ENCODE measurements at regions of chr6 and their contacts with region 1.

Region 1: DNA sequence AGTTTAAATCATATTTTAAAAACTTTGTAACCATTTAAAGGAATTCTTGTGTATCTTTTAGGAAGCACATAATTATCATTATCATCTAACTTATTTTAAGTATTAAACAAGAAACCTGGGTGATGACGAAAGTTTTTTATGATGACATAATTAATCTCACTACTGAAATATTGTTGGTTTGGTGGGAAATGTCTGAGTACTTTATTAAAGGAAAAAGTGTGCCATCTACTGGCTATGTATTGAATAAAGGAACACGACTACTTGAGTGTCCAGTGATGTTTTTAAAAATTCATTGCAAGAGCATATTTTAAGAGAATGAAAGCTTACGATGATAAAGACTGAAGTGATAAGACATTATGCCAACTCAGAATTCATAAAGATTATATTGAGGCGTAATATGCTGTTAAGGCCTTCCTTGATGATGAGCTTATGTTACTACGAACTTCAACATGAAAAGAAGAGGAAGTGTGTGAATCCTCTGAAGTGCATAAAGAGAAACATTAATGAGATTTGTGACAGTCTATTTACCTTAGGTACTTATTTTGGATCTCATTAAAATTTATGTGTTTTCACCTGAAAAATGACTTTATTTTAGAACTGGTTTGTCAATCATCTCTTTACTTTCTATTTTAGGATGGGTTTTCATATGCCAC is 12.0 kb upstream of the TRMT11 start:
- DNase-seq: no peak
- H3K4me3 ChIP-seq: no peak overlapping the region
- H3K27ac ChIP-seq: peak overlapping the region in 38 of 59 donors; percentile 2 to 78 (median 51)
- H3K27me3 ChIP-seq: no peaks in the 10 kb centered on the region
- CTCF ChIP-seq: peak; percentile 53 to 92 (median 72)

Region 2: DNA sequence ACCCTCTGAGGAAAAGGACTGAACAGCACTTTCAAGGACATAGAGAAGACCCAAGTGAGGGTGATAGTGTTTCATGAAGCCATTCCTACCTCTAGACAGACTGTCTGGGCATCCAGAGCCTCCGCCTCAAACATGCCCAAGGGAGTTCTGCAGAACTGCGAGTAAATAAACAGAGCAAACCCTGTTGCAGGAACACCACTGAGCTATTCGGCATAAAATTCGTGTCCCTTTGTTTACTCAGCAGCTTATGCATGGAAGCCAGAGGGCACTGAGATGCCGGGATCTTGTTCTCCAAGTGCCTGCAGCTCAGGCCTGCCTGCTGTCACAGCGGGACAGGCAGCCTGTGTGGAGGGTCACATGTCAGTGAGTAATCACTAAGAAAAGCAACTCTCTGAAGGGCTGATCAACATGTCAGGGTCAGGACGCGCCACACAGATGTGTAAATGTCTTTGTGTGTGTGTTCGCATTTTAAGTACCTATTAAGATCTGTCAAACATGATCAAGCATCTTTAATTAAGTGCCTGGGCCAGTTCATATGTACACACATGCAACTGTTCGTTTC is 389.8 kb before region 1 on chr6:
- intact Hi-C with region 1: loop called in 1 of 2 experiments (anchors 10 kb)
- DNase-seq: peak in 9 of 10 donors; percentile 59 to 87 (median 82)
- H3K4me3 ChIP-seq: peak overlapping the region in 10 of 59 donors; percentile 0 to 27 (median 22)
- H3K27ac ChIP-seq: peak overlapping the region in 50 of 59 donors; percentile 4 to 85 (median 58)
- H3K27me3 ChIP-seq: peaks cover 0 to 4% (median 0%) of the 10 kb centered on the region in 45 donors
- CTCF ChIP-seq: peak; percentile 24 to 82 (median 61)

Region 3: DNA sequence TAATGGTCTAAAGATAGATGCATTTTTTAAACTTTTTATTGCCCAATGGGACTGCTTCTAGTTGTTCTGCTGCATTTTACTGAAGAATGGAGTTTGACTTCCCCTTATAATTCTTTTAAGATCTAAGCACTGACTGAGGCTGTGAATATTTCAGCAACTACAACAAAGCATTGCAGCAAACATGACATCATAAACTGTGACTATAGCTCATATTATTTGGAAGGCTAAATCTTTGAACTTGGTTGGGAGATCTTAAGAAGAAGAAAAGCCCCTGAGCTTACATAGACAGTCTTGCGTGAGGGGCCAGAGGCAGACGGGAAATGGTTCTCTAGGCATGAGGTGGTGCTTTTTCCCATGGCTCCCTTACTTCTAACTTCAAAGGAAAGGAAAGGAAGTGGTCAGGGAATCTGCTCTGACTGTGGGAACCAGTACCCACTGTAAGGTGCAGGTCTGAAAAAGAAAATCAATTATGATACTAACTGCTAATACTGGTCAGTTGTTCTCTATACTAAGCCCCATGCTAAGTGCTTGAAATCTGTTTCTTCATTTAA is 210.1 kb before region 1 on chr6:
- intact Hi-C with region 1: no loop called
- DNase-seq: no peak
- H3K4me3 ChIP-seq: no peak overlapping the region
- H3K27ac ChIP-seq: peak overlapping the region in 15 of 59 donors; percentile 6 to 45 (median 24)
- H3K27me3 ChIP-seq: peaks cover 0 to 6% (median 0%) of the 10 kb centered on the region in 45 donors
- CTCF ChIP-seq: no peak

Region 4: GRCh38 chr6:125779924-125780539 is 194.3 kb before region 1 on chr6:
- intact Hi-C with region 1: loop called in 1 of 2 experiments (anchors 2 kb)
- DNase-seq: peak; percentile 69 to 93 (median 83)
- H3K4me3 ChIP-seq: peak overlapping the region; percentile 42 to 93 (median 77)
- H3K27ac ChIP-seq: peak overlapping the region; percentile 72 to 99 (median 93)
- H3K27me3 ChIP-seq: no peaks in the 10 kb centered on the region
- CTCF ChIP-seq: peak in 52 of 56 donors; percentile 23 to 71 (median 51)

Region 5: DNA sequence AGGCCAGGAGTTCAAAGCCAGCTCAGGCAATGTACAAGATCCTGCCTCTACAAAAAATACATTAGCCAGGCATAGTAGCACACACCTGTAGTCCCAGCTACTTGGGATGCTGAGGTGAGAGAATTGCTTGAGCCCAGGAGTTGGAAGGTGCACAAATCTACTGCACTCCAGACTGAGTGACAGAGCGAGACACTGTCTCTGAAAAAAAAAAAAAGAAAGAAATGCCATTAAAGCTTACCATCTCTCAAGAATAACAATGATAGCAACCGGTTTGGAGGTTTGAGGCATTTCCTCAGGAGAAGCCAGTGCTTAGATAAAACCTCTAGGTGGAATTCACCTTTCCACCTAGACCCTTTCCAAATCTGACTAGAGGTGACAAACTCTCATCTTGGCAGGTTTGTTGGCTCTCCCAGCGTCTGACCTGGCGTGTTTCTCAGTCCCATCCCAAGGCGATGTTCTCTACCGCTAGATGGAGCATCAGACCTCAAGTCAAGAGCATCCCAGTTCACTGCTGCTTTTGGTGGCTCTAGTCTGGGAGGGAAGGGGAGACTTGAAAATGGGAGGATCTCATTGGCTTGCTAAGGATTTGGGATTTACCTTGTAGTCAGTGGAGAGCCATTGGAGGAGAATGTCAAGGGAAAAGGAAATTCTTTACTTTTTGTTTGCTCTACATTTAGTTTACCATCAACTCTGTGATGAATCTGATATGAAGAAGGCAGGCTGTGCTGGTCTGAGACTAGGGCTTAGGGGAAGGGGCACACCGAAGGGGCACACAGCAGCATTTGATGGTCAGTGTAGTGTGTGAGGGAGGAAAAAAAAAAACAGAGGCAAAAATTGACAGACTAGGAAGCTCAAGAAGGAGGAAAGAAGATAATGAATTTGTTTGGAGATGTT is 115.7 kb before region 1 on chr6:
- intact Hi-C with region 1: loop called in 1 of 2 experiments (anchors 5 kb)
- DNase-seq: peak in 8 of 10 donors; percentile 45 to 74 (median 56)
- H3K4me3 ChIP-seq: no peak overlapping the region
- H3K27ac ChIP-seq: peak overlapping the region in 55 of 59 donors; percentile 4 to 99 (median 73)
- H3K27me3 ChIP-seq: no peaks in the 10 kb centered on the region
- CTCF ChIP-seq: peak; percentile 40 to 88 (median 71)

Region 6: DNA sequence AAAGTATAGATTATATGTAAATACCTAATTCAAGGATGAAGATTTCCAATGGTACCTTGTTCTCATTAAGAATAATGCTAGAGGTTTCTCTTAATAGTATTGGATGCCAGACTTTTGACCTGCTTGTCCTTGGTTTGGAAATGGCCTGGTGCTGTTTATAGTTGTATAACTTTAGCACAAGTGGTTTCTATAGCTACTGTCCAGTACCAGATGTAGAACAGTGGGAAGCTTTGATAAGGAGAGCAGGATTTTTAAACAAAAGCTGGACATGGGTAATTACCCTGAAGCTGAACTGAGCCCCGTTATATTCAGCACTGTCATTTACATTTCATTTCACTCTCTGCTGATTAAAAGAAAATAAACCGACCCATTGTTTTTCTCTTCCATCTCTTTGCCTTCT is 55.7 kb after region 1 on chr6:
- intact Hi-C with region 1: no loop called
- DNase-seq: no peak
- H3K4me3 ChIP-seq: no peak overlapping the region
- H3K27ac ChIP-seq: peak overlapping the region in 2 of 59 donors; percentile 11 to 34
- H3K27me3 ChIP-seq: no peaks in the 10 kb centered on the region
- CTCF ChIP-seq: no peak